ENCODE measurements at regions of chr6 and their contacts with region 1.

Region 1: GRCh38 chr6:154060076-154060475 is 21.0 kb downstream of the OPRM1 start:
- DNase-seq: no peak
- ATAC-seq: no peak
- H3K4me3 Mint-ChIP-seq: no peak overlapping the region
- H3K27ac Mint-ChIP-seq: no peak overlapping the region
- H3K4me1 Mint-ChIP-seq: no peaks in the 10 kb centered on the region
- H3K27me3 Mint-ChIP-seq: no peaks in the 10 kb centered on the region

Region 2: DNA sequence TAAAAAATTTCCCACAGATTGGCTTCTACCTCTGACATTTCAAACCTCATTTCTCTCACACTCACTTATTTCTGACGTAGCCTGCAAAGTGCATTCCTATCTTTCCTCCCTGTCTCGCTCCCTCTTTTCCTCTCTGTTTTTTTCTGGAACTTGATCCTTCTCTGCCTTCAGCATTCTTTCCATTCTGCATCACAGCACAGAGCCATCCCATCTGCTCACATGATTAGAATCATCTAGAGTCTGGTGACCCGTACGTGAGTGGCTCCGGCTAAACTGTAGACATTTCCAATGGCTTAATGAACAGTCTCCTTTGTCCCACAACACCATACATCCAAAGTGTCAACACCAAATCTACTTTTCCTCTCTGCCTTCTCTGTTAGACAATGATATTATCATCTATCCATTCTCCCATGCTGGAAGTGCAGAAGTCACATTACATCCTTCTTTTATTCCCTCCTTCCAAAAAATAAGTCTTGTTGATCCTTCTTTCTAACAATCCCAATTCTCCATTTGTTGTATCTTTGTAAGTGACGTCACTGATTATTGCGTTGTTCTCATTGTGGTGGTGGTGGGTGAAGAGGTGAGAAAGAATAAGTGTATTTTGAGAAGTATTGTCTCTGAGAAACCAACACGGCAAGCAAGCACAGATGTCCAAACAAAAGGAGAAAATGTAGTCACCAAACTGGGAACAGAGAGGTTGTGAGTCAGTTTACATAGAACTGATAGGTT is 20.5 kb after region 1 on chr6:
- CTCF ChIA-PET with region 1: no interaction called
- POLR2A ChIA-PET with region 1: no interaction called
- intact Hi-C with region 1: loop called (anchors 1 kb)
- DNase-seq: no peak
- ATAC-seq: no peak
- H3K4me3 Mint-ChIP-seq: no peak overlapping the region
- H3K27ac Mint-ChIP-seq: no peak overlapping the region
- H3K4me1 Mint-ChIP-seq: no peaks in the 10 kb centered on the region
- H3K27me3 Mint-ChIP-seq: peaks cover 2% of the 10 kb centered on the region

Region 3: GRCh38 chr6:154095571-154095970 is 35.5 kb after region 1 on chr6:
- CTCF ChIA-PET with region 1: no interaction called
- POLR2A ChIA-PET with region 1: no interaction called
- intact Hi-C with region 1: loop called in 1 of 2 experiments (anchors 1 kb)
- DNase-seq: no peak
- ATAC-seq: no peak
- H3K4me3 Mint-ChIP-seq: no peak overlapping the region
- H3K27ac Mint-ChIP-seq: no peak overlapping the region
- H3K4me1 Mint-ChIP-seq: no peaks in the 10 kb centered on the region
- H3K27me3 Mint-ChIP-seq: no peaks in the 10 kb centered on the region

Region 4: GRCh38 chr6:154106251-154106650 is 46.2 kb after region 1 on chr6:
- CTCF ChIA-PET with region 1: no interaction called
- POLR2A ChIA-PET with region 1: no interaction called
- intact Hi-C with region 1: loop called in 1 of 2 experiments (anchors 1 kb)
- DNase-seq: no peak
- ATAC-seq: no peak
- H3K4me3 Mint-ChIP-seq: no peak overlapping the region
- H3K27ac Mint-ChIP-seq: no peak overlapping the region
- H3K4me1 Mint-ChIP-seq: no peaks in the 10 kb centered on the region
- H3K27me3 Mint-ChIP-seq: peaks cover 14% of the 10 kb centered on the region

Region 5: DNA sequence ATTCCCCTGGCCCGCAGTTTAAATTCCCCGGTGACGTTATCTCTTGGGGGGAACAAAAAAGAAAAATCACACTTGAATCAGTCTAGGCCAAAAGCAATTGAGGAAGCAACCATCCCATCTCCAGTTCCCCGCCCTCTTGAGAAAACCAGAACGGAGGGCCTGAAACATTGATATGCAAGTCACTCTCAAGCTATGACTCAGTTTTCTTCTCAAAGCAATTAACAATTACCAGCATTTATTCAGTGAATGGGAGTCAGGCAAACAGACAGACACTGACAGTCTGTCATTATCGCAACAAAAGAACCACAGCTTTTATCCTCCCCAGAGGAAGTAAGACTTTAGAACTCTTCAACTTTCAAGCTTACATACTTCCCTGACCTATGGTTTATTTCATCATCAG is 79.8 kb after region 1 on chr6:
- CTCF ChIA-PET with region 1: no interaction called
- POLR2A ChIA-PET with region 1: no interaction called
- intact Hi-C with region 1: no loop called
- DNase-seq: no peak
- ATAC-seq: no peak
- H3K4me3 Mint-ChIP-seq: no peak overlapping the region
- H3K27ac Mint-ChIP-seq: no peak overlapping the region
- H3K4me1 Mint-ChIP-seq: peaks cover 5% of the 10 kb centered on the region
- H3K27me3 Mint-ChIP-seq: peaks cover 6% of the 10 kb centered on the region